ENCODE measurements at regions of chr19 and their contacts with region 1.

Region 1: GRCh38 chr19:44912854-44913253 is 1.6 kb upstream of the APOC1 start:
- DNase-seq: no peak
- ATAC-seq: no peak
- H3K4me3 ChIP-seq: no peak overlapping the region
- H3K27ac ChIP-seq: peak overlapping the region; percentile 91; the same call in 2 of the 3 replicates
- H3K4me1 ChIP-seq: peaks cover 36 to 82% of the 10 kb centered on the region in 2 experiments
- H3K27me3 ChIP-seq: no peaks in the 10 kb centered on the region
- CTCF ChIP-seq: no peak
- EP300 ChIP-seq: no peak
- POLR2A ChIP-seq: no peak
- RAD21 ChIP-seq: no peak

Region 2: GRCh38 chr19:44890366-44891015 is 22.4 kb before region 1 on chr19:
- CTCF ChIA-PET with region 1: no interaction called
- POLR2A ChIA-PET with region 1: interaction called, 4 read pairs
- in situ Hi-C with region 1: no loop called
- intact Hi-C with region 1: loop called (anchors 2 kb)
- DNase-seq: peak; percentile 93 to 100 (median 96)
- ATAC-seq: peak; percentile 93
- H3K4me3 ChIP-seq: peak overlapping the region; percentile 46
- H3K27ac ChIP-seq: peak overlapping the region; percentile 96
- H3K4me1 ChIP-seq: peaks cover 17 to 33% of the 10 kb centered on the region in 2 experiments
- H3K27me3 ChIP-seq: no peaks in the 10 kb centered on the region
- CTCF ChIP-seq: no peak
- EP300 ChIP-seq: peak; percentile 46; the same call in 1 of the 2 replicates
- POLR2A ChIP-seq: peak; percentile 98
- RAD21 ChIP-seq: peak in 1 of 2 experiments; percentile 18; a peak in 1 of 4 replicates

Region 3: DNA sequence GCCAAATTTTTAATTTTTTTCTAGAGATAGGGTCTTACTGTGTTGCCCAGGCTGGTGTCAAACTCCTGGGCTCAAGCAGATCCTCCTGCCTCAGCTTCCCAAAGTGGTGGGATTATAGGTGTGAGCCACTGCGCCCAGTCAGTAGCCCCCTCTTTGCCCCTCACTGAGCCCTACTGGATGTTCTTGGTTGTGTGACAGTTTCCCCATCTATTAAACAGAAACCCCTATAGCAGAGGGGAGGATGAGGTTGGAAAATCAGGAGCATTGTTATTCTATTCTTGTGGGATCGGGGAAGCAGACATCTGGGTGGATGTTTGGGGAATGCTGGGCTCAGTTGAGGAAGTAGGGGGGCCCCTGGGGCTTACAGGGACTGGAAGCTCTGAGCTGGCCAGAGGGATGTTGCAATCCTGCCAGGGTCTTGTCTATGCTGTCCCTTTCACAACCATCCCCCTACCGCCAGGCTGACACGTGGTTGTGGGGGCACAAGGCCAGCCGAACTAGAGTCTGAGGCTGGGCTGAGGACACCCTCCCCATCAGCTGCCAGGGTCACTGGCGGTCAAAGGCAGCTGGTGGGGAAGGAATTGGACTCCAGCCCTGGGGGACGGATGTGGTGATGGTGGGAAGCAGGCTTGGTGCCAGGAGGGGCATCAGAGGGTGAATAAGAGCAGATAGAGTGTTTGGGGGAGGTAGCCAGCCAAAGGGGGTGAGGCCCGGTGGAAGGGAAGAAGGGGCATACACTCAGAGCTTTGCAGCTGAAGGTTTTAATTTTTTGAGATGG is 12.4 kb after region 1 on chr19:
- CTCF ChIA-PET with region 1: no interaction called
- POLR2A ChIA-PET with region 1: interaction called, 11 read pairs
- in situ Hi-C with region 1: no loop called
- intact Hi-C with region 1: no loop called
- DNase-seq: no peak
- ATAC-seq: no peak
- H3K4me3 ChIP-seq: no peak overlapping the region
- H3K27ac ChIP-seq: no peak overlapping the region
- H3K4me1 ChIP-seq: peaks cover 0 to 24% of the 10 kb centered on the region in 2 experiments; a peak in 4 of 5 replicates
- H3K27me3 ChIP-seq: no peaks in the 10 kb centered on the region
- CTCF ChIP-seq: no peak
- EP300 ChIP-seq: no peak
- POLR2A ChIP-seq: no peak
- RAD21 ChIP-seq: no peak

Region 4: DNA sequence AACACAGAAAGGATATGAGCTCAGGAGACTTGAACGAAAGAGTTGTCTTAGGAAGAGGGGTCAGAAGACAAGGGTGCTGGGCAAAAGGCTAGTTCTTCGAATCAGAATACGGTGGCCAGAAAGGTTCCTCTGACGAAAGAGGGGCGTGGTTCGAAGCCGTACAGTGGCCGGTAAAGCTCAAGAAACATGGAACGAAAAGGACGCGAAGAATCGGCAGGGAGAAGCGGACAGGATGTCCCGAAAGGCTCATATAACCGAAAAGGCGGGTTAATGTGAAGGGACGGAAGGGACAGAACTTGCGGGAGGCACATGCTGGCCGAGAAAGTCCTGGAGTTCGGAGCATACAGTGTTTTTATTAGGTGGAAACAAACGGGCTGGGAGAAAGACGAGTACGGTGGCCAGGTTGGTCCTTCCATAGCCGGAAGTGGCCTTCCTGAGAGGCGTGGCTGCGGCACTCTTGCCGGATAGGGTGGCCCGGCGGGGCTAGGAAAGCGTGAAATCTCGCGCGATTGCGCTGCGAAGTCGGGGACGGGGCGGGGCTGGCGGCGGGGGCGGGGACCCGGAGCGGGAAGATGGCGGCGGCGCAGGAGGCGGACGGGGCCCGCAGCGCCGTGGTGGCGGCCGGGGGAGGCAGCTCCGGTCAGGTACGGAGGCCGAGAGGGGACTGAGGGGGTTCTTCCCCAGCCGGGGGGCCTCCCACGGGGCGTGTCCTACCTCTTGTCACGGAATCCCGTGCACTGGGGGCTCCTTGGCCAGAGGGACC is 42.2 kb after region 1 on chr19 and contains the start of gene CLPTM1:
- CTCF ChIA-PET with region 1: interaction called, 6 read pairs
- POLR2A ChIA-PET with region 1: interaction called, 4 read pairs
- in situ Hi-C with region 1: loop called (anchors 5 kb)
- intact Hi-C with region 1: no loop called
- DNase-seq: peak; percentile 96 to 98 (median 97)
- ATAC-seq: peak; percentile 97
- H3K4me3 ChIP-seq: peak within 1 kb of the TSS; percentile 100
- H3K27ac ChIP-seq: peak within 1 kb of the TSS; percentile 90
- H3K4me1 ChIP-seq: peaks cover 16 to 31% of the 10 kb centered on the region in 2 experiments; a peak in 4 of 5 replicates
- H3K27me3 ChIP-seq: no peaks in the 10 kb centered on the region
- CTCF ChIP-seq: no peak; a peak in 1 of 6 replicates
- EP300 ChIP-seq: no peak
- POLR2A ChIP-seq: peak; percentile 98
- RAD21 ChIP-seq: no peak
- polyA plus RNA-seq, gene CLPTM1: 0.37 to 2.4 TPM

Measured in K562 (cell line).